ENCODE measurements at regions of chr5 and their contacts with region 1.

Region 1: GRCh38 chr5:94524841-94525697 is 93.3 kb downstream of the KIAA0825 start:
- DNase-seq: no peak

Region 2: DNA sequence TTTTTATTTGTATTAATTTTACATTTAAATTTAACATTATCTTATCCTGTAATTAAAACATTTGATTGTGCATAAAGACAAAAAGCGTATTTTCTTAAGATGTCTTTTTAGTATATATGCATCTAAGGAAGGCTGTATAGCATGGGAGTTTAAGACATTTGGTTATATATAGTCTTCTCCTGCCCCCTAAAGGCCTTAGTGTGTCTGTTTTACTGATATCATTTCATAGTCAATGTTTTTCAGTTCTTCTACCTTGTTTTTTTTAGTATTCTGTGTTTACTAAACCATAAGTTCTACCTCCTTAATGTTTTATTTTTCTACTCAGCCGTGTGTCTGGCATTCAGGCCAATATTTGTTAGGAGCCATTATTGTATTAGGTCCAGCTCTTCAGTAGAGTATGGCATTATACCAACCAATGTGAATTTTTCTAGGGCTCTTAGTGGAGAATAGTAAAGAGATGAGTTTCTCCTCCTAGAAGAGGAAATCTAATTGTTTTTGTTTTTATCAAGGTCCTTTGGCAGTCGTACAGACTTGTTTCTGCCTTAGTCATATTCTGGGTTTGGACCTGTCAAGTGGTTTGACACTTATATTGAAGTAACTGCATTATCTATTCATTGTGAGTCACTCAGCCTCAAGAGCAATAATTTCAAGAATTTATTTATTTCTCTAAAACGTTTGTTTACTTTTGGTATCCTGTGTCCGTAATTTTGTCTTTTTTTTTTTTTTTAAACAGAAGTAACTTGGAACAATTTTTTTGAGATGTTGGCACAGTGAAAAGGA is 168.2 kb after region 1 on chr5:
- intact Hi-C with region 1: loop called (anchors 10 kb)
- DNase-seq: no peak